Kidney (tissue), 22 donors: ENCODE measurements at regions of chr2 and their contacts with region 1.

Region 1: DNA sequence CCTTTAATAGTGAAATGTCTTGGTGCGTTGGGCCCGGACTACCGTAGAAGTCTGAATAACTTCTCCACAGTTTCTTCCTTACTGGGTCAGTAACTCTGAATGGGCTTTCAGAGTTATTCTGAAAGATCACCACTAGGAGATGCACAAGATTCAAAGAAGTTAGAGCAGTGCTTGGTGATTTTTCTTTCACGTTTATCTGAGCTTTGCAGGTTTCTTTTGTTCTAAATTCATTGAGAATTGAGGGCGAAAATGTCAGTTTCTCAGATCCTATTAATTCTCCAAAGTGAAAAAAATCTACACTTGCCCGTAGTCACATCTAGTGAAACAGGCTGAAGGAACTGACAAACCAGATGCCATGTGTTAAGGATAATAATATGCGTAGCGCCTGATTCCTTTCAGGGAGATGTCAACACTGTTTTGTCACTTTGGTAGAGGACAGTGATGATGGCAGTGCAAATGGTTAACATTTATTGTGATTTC is 70.1 kb downstream of the QPCT start:
- DNase-seq: peak in 2 of 5 donors; percentile 80 to 88
- H3K4me3 ChIP-seq: no peak overlapping the region
- H3K27ac ChIP-seq: no peak overlapping the region
- H3K4me1 ChIP-seq: peaks cover 0 to 4% (median 3%) of the 10 kb centered on the region in 3 donors
- H3K27me3 ChIP-seq: no peaks in the 10 kb centered on the region
- CTCF ChIP-seq: peak; percentile 87

Region 2: DNA sequence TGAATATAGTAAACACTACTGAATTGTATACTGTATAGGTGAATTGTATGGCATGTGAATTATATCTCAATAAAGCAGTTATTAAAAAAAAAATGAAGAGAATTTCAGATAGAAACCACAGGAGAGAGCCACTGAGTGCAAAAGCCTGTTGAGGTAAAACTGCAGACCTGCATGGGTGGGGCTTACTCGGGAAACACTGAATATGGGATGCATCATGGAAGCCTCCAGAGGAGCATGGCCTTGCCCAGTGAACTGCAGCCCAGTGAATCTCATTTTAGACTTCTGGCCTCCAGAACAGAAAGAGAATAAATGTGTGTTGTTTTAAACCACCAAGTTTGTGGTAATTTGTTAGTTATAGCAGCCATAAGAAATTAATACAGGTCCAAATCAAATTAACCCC is 314.5 kb before region 1 on chr2:
- intact Hi-C with region 1: no loop called
- DNase-seq: no peak
- H3K4me3 ChIP-seq: no peak overlapping the region
- H3K27ac ChIP-seq: no peak overlapping the region
- H3K4me1 ChIP-seq: no peaks in the 10 kb centered on the region
- H3K27me3 ChIP-seq: no peaks in the 10 kb centered on the region
- CTCF ChIP-seq: no peak

Region 3: DNA sequence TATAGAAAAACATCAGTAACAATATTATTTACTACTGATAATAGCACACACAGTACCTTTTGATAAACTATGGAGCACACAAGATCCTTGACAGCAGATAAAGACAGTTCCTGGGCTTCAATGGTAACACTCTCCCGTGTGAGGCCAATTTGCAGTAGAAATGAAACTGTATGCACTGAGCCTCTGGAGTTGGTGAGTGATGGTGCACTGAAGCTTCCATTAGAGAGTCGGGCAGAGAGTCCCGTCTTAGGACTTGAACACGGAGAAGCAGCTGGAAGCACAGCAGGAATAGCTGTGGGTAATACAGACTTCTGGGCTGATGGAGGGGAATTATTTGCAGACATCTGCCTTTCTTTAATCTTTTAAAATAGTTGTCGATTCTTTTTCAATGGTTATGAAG is 98.3 kb before region 1 on chr2:
- intact Hi-C with region 1: no loop called
- DNase-seq: no peak
- H3K4me3 ChIP-seq: no peak overlapping the region
- H3K27ac ChIP-seq: no peak overlapping the region
- H3K4me1 ChIP-seq: peaks cover 0 to 2% (median 2%) of the 10 kb centered on the region in 3 donors
- H3K27me3 ChIP-seq: no peaks in the 10 kb centered on the region
- CTCF ChIP-seq: no peak

Region 4: DNA sequence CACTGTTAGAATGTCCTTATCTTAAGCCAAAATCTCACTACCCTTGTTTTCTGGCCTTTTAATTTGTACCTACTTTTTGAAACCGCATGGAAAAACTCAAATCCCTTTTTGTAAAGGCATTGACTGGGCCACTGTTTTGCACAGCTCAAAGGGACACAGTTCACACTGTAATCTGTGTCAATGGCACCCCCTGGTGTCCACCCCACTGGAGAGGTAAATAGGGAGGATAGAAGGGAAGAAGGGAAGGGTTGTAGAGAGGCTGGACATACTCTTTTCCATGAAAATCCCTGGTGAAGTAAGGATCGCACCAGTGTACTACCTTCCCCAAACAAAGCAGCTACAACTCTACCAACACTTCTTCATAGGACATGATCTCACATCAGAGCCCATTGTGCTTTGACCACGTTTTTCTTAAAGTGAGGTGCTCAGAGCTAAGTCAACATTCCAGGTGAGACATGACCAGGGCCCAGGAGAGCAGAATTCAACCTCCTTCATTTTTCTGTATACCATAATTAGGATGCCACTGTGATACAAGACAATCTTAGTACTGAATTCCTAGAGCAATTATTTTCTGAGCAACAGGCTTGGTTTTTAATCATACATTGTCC is 418.2 kb after region 1 on chr2:
- intact Hi-C with region 1: loop called (anchors 5 kb)
- DNase-seq: peak; percentile 85 to 94 (median 89)
- H3K4me3 ChIP-seq: no peak overlapping the region
- H3K27ac ChIP-seq: no peak overlapping the region
- H3K4me1 ChIP-seq: peaks cover 0 to 4% (median 0%) of the 10 kb centered on the region in 3 donors
- H3K27me3 ChIP-seq: no peaks in the 10 kb centered on the region
- CTCF ChIP-seq: peak; percentile 82

Region 5: DNA sequence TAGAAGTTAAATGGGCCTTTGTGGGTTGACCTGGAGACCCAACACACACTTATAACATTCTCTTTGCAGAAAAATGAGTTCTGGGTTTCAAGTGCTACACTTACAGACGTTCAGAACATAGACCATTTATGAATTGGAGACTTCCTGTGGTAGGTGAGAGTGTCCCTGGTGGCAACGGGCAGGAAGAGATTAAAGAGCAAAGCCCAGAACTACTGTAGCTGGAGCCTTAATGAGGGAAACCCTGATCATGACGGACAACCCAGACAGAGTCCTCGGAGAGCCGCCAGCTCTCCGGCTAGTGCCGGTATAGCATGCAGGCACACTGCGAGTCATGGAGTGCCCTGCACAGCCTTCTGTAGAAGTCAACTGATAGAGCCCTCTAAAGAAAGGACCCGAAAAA is 466.0 kb after region 1 on chr2:
- intact Hi-C with region 1: loop called (anchors 10 kb)
- DNase-seq: no peak
- H3K4me3 ChIP-seq: no peak overlapping the region
- H3K27ac ChIP-seq: no peak overlapping the region
- H3K4me1 ChIP-seq: no peaks in the 10 kb centered on the region
- H3K27me3 ChIP-seq: no peaks in the 10 kb centered on the region
- CTCF ChIP-seq: no peak